ENCODE measurements at regions of chr2 and their contacts with region 1.

Region 1: GRCh38 chr2:72150157-72150865 is 2.6 kb upstream of the CYP26B1 start:
- H3K4me3 ChIP-seq: peak overlapping the region; percentile 30
- H3K27ac ChIP-seq: no peak overlapping the region; the same call in 1 of the 2 replicates
- H3K4me1 ChIP-seq: peaks cover 11% of the 10 kb centered on the region
- CTCF ChIP-seq: peak; percentile 74

Region 2: GRCh38 chr2:71798266-71799012 is 351.9 kb before region 1 on chr2:
- CTCF ChIA-PET with region 1: interaction called, 26 read pairs
- POLR2A ChIA-PET with region 1: no interaction called
- H3K4me3 ChIP-seq: no peak overlapping the region
- H3K27ac ChIP-seq: no peak overlapping the region
- H3K4me1 ChIP-seq: no peaks in the 10 kb centered on the region
- CTCF ChIP-seq: peak; percentile 47; the same call in 1 of the 2 replicates

Region 3: GRCh38 chr2:71995067-71995665 is 155.1 kb before region 1 on chr2:
- CTCF ChIA-PET with region 1: interaction called, 11 read pairs
- POLR2A ChIA-PET with region 1: no interaction called
- H3K4me3 ChIP-seq: no peak overlapping the region
- H3K27ac ChIP-seq: no peak overlapping the region
- H3K4me1 ChIP-seq: no peaks in the 10 kb centered on the region
- CTCF ChIP-seq: no peak

Region 4: GRCh38 chr2:72579591-72580180 is 429.4 kb after region 1 on chr2:
- CTCF ChIA-PET with region 1: interaction called, 29 read pairs
- POLR2A ChIA-PET with region 1: no interaction called
- H3K4me3 ChIP-seq: no peak overlapping the region
- H3K27ac ChIP-seq: no peak overlapping the region
- H3K4me1 ChIP-seq: no peaks in the 10 kb centered on the region
- CTCF ChIP-seq: no peak; the same call in 1 of the 2 replicates

Measured in HEK293 (cell line).